Common myeloid progenitor, CD34-positive (primary cell): ENCODE measurements at regions of chr1 and their contacts with region 1.

Region 1: DNA sequence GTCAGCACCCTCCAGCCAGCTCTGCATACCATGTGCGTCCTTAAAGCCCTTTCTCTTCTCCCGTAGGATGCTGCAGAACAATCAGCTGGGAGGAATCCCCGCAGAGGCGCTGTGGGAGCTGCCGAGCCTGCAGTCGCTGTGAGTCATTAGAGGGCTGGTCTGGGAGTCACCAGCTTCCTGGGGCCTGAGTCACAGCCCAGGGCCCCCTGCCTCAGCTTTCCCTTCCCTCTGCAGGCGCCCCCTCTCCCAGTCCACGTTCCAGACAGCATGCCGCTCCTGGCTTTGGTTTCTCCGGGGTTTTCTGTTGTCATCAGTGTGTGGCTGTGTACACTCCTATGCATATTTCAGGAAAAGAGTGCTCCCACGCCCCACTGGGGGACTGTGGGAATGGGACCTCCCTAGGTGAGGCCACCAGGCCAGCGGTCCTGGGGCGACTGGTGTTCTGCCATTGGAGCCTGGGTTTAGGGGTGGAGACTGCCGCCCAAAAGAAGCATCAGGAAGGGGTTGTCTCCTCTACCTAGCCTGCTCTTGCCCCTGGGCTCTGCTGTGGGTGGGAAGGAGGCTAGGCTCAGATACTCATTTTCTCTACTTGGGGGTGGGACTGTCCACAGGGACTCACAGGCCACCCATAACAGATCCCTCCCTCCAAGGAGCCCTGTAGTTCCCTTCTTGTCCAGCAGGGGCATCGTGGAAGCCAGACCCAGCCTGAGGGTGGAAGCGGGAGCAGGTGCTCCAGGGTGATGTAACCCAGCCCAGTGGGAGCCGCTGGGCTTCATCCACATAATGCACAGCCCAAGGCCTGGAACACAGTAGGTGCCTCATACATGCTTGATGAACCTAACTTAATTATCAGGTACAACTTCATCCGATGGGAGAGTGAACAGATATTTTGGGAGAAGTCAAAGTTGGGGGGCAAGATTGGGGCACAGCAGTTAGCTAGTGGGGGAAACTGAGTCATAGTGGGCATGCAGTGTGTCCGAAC is 42.5 kb downstream of the LGR6 start:
- DNase-seq: peak; percentile 75 to 80 (median 76)
- H3K4me3 ChIP-seq: no peak overlapping the region
- H3K27ac ChIP-seq: no peak overlapping the region
- H3K4me1 ChIP-seq: peaks cover 0 to 7% (median 5%) of the 10 kb centered on the region in 4 experiments
- H3K27me3 ChIP-seq: peaks cover 0 to 11% (median 0%) of the 10 kb centered on the region in 5 experiments

Region 2: GRCh38 chr1:202144402-202145067 is 91.6 kb before region 1 on chr1 and contains the start of gene ARL8A:
- CTCF ChIA-PET with region 1: no interaction called
- POLR2A ChIA-PET with region 1: no interaction called
- DNase-seq: peak in 1 of 3 donors; percentile 63
- H3K4me3 ChIP-seq: peak within 1 kb of the TSS; percentile 75 to 90 (median 84)
- H3K27ac ChIP-seq: peak within 1 kb of the TSS; percentile 77 to 88
- H3K4me1 ChIP-seq: peaks cover 1 to 37% (median 23%) of the 10 kb centered on the region in 4 experiments
- H3K27me3 ChIP-seq: no peaks in the 10 kb centered on the region

Region 3: GRCh38 chr1:202170726-202171125 is 65.4 kb before region 1 on chr1:
- CTCF ChIA-PET with region 1: no interaction called
- POLR2A ChIA-PET with region 1: no interaction called
- DNase-seq: no peak
- H3K4me3 ChIP-seq: no peak overlapping the region
- H3K27ac ChIP-seq: no peak overlapping the region
- H3K4me1 ChIP-seq: peaks cover 3 to 34% (median 23%) of the 10 kb centered on the region in 4 experiments
- H3K27me3 ChIP-seq: no peaks in the 10 kb centered on the region

Region 4: GRCh38 chr1:202192770-202193613 is 43.2 kb before region 1 on chr1:
- CTCF ChIA-PET with region 1: interaction called, 10 read pairs
- POLR2A ChIA-PET with region 1: no interaction called
- DNase-seq: peak; percentile 45 to 57 (median 52)
- H3K4me3 ChIP-seq: peak overlapping the region in 3 of 7 experiments; percentile 24 to 54 (median 43)
- H3K27ac ChIP-seq: no peak overlapping the region
- H3K4me1 ChIP-seq: peaks cover 0 to 13% (median 9%) of the 10 kb centered on the region in 4 experiments
- H3K27me3 ChIP-seq: peaks cover 0 to 33% (median 14%) of the 10 kb centered on the region in 5 experiments

Region 5: DNA sequence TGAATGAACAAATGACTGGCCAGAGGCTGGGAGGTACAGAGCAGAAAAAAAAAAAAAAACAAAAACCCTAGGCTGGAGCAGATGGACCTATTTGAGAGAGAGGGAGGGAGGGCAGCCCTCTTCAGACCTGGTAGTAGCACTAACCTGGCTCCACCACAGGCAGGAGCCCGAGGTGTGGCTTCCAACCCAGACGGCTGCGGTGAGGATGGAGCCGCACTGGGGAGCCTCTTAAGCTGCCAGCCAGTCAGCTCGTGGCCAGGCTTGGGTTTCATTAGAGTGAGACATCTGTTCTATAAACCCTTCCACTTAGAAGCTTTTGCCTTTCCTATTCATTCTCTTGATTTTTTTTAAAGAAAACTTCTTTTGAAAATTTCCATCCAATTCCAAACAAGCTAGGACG is 25.8 kb before region 1 on chr1:
- CTCF ChIA-PET with region 1: interaction called, 11 read pairs
- POLR2A ChIA-PET with region 1: no interaction called
- DNase-seq: peak in 2 of 3 donors; percentile 59 to 71
- H3K4me3 ChIP-seq: no peak overlapping the region
- H3K27ac ChIP-seq: no peak overlapping the region
- H3K4me1 ChIP-seq: peaks cover 3 to 12% (median 6%) of the 10 kb centered on the region in 4 experiments
- H3K27me3 ChIP-seq: peaks cover 4 to 29% (median 19%) of the 10 kb centered on the region in 5 experiments

Region 6: GRCh38 chr1:202247894-202248681 is 11.9 kb after region 1 on chr1:
- CTCF ChIA-PET with region 1: interaction called, 14 read pairs
- POLR2A ChIA-PET with region 1: no interaction called
- DNase-seq: peak in 1 of 3 donors; percentile 13
- H3K4me3 ChIP-seq: no peak overlapping the region
- H3K27ac ChIP-seq: no peak overlapping the region
- H3K4me1 ChIP-seq: peaks cover 0 to 20% (median 9%) of the 10 kb centered on the region in 4 experiments
- H3K27me3 ChIP-seq: no peaks in the 10 kb centered on the region